BJ (cell line): ENCODE measurements at regions of chr4 and their contacts with region 1.

Region 1: GRCh38 chr4:38759113-38759789 is 23.5 kb downstream of the TLR10 start:
- DNase-seq: no peak
- H3K4me3 ChIP-seq: no peak overlapping the region
- H3K27me3 ChIP-seq: no peaks in the 10 kb centered on the region
- CTCF ChIP-seq: peak; percentile 64

Region 2: DNA sequence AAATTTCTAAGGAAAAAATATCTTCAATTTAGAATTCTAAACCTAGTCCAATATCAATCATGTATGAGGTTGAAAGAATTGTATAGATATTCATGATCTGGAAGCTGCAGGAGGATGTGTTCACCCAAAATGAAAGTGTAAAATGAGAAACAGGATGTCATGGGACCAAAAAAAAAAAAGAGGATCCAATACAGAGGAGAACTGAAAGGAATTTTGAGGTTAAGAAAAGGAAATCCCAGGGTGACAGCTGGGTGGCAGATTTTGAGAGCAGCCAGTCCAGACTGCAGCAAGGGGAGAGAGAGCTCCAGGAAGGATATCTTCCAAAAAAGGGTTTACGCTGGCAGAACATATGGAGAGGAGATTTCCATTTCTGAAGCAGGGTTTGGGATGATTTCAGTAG is 15.4 kb before region 1 on chr4:
- CTCF ChIA-PET with region 1: no interaction called
- POLR2A ChIA-PET with region 1: no interaction called
- DNase-seq: no peak
- H3K4me3 ChIP-seq: no peak overlapping the region
- H3K27me3 ChIP-seq: no peaks in the 10 kb centered on the region; the same call in 1 of the 2 replicates
- CTCF ChIP-seq: no peak

Region 3: DNA sequence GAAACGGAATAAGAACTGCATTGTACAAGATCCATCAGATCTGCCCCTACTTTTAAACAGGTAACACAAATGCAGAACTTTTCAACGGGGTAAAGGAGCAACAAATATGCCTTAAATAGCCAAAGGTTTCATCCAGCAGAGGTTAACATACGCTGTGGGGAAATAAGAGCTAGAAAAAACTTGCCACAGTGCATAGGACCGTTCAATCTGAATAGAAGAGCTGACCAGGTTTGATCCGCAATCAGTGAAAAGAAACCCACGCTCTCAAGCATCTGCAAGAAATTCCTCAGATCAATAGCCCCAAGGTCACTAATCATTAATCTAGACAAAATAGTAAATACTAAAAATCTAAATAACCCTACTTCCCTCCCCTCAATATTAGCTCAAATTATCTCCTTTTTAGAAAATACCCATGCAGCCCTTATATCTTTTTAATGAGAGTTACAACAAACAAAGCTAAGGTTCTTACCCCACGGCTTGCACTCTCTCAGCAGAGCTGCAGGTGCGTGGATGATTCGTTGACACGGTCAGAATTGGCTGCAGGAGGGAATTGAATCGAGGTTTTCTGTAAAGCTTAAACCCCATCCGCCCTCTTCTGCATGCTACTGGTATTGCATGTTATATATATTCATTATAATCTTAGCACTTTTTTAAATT is 23.3 kb after region 1 on chr4 and contains the start of gene TLR10:
- CTCF ChIA-PET with region 1: interaction called, 113 read pairs
- POLR2A ChIA-PET with region 1: no interaction called
- DNase-seq: no peak
- H3K4me3 ChIP-seq: no peak within 1 kb of the TSS
- H3K27me3 ChIP-seq: no peaks in the 10 kb centered on the region
- CTCF ChIP-seq: peak; percentile 68
- polyA plus RNA-seq, gene TLR10: not detected in 2 replicates

Region 4: GRCh38 chr4:38788327-38788726 is 29.1 kb after region 1 on chr4:
- CTCF ChIA-PET with region 1: interaction called, 113 read pairs
- POLR2A ChIA-PET with region 1: no interaction called
- DNase-seq: no peak
- H3K4me3 ChIP-seq: no peak overlapping the region
- H3K27me3 ChIP-seq: peaks cover 5% of the 10 kb centered on the region
- CTCF ChIP-seq: no peak

Region 5: DNA sequence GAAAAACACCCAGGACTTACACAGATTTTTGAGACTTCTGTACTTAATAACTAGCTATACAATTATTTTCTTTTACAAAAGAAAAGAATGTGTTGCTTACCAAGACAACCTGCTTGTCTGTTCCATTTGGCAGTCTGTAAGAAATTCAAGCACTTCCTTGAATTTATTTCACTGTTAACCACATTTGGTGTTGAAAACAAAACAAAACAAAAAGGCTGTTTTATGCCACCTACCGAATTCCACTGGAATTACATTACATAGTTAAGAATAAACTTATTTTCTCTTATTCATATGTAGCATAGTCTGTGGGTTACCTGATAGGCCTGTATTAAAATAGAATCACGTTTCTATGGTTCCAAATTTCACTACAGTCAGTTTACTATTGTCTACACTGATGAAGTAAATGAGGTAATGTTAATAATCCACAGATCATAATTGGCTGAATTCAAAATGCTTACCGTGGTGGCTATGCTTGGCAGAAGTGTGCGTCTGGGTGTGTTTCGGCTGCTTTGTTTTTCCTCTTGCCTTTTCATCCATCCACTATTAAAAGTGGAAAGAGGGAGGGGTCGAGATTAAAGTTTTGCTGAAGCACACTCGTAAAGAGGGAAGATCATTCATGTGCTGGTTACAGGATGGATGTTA is 45.5 kb after region 1 on chr4 and contains the start of gene TLR1:
- CTCF ChIA-PET with region 1: interaction called, 33 read pairs
- POLR2A ChIA-PET with region 1: no interaction called
- DNase-seq: no peak
- H3K4me3 ChIP-seq: no peak within 1 kb of the TSS
- H3K27me3 ChIP-seq: no peaks in the 10 kb centered on the region
- CTCF ChIP-seq: peak; percentile 51
- polyA plus RNA-seq, gene TLR1: 0.05 and 0.16 TPM in 2 replicates

Region 6: GRCh38 chr4:39134683-39135319 is 375.6 kb after region 1 on chr4:
- CTCF ChIA-PET with region 1: interaction called, 21 read pairs
- POLR2A ChIA-PET with region 1: no interaction called
- DNase-seq: no peak
- H3K4me3 ChIP-seq: no peak overlapping the region
- H3K27me3 ChIP-seq: no peaks in the 10 kb centered on the region
- CTCF ChIP-seq: no peak